Natural killer cell (primary cell): ENCODE measurements at regions of chr15 and their contacts with region 1.

Region 1: DNA sequence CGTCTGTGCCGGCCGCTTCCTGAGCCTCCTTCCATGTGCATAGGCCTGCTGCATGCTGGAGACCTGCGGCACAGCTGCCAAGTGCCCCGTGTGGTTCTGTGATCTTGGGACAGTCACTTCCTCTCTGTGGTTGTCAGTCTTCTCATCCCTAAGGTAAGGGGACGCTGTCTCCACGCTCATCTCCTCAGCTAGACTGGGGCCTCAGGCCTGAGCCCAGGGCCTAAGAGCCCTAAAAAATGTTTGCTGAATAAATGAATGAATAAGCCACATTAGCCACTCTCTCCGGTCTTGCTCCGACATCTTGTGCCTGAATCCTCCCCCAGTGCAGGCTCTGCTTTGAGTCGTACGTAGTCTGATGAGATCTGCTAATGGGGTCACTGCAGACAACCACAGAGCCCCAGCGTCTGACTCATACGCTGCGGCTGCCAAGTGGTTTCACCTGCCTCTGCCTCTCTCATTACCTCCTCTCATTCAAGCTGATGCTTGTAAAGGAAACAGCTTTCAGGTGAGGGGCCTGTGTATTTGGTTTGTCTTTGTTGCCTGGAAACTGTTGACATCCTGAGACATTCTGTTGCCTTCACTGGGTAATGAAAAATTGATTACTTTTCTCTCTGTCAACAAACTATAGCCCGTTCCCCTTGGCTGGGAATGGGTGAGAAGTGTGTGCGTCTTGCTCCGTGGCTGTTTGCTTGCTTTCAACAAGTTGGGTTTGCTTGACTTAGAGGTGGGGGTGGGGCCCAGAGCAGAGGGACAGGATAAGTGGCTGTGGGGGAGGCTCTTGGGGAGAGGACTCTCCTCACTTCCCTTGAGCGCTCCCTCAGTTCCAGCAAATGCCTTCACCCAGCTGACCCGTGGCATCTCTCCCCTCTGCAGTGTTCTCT is 15.9 kb downstream of the RPLP1 start:
- DNase-seq: peak; percentile 85 to 95
- ATAC-seq: peak; percentile 82 to 94 (median 92)
- H3K4me3 ChIP-seq: no peak overlapping the region
- H3K4me3 Mint-ChIP-seq: peak overlapping the region; percentile 88
- H3K27ac ChIP-seq: peak overlapping the region; percentile 81
- H3K27ac Mint-ChIP-seq: peak overlapping the region; percentile 89 to 98
- H3K4me1 ChIP-seq: peaks cover 32% of the 10 kb centered on the region
- H3K4me1 Mint-ChIP-seq: peaks cover 20 to 21% of the 10 kb centered on the region in 2 donors
- H3K27me3 ChIP-seq: peaks cover 2% of the 10 kb centered on the region
- H3K27me3 Mint-ChIP-seq: peaks cover 17 to 30% of the 10 kb centered on the region in 2 donors
- CTCF ChIP-seq: no peak

Region 2: GRCh38 chr15:69253156-69253555 is 215.3 kb before region 1 on chr15:
- intact Hi-C with region 1: no loop called
- DNase-seq: no peak
- ATAC-seq: no peak
- H3K4me3 ChIP-seq: no peak overlapping the region
- H3K4me3 Mint-ChIP-seq: no peak overlapping the region
- H3K27ac ChIP-seq: no peak overlapping the region
- H3K27ac Mint-ChIP-seq: no peak overlapping the region
- H3K4me1 ChIP-seq: no peaks in the 10 kb centered on the region
- H3K4me1 Mint-ChIP-seq: peaks cover 0 to 5% of the 10 kb centered on the region in 2 donors
- H3K27me3 ChIP-seq: no peaks in the 10 kb centered on the region
- H3K27me3 Mint-ChIP-seq: no peaks in the 10 kb centered on the region
- CTCF ChIP-seq: no peak

Region 3: GRCh38 chr15:69413822-69414700 is 54.4 kb before region 1 on chr15 and contains the start of gene KIF23:
- intact Hi-C with region 1: no loop called
- DNase-seq: peak; percentile 86 to 98
- ATAC-seq: peak; percentile 94 to 98 (median 98)
- H3K4me3 ChIP-seq: peak within 1 kb of the TSS; percentile 89
- H3K4me3 Mint-ChIP-seq: peak within 1 kb of the TSS; percentile 79
- H3K27ac ChIP-seq: no peak within 1 kb of the TSS
- H3K27ac Mint-ChIP-seq: peak within 1 kb of the TSS; percentile 44 to 77
- H3K4me1 ChIP-seq: peaks cover 11% of the 10 kb centered on the region
- H3K4me1 Mint-ChIP-seq: peaks cover 5 to 10% of the 10 kb centered on the region in 2 donors
- H3K27me3 ChIP-seq: peaks cover 2% of the 10 kb centered on the region
- H3K27me3 Mint-ChIP-seq: peaks cover 0 to 4% of the 10 kb centered on the region in 2 donors
- CTCF ChIP-seq: no peak
- total RNA-seq, gene KIF23: 1.2 to 2.1 (median 1.9) TPM

Region 4: GRCh38 chr15:69452692-69453521 is 15.6 kb before region 1 on chr15 and contains the start of gene RPLP1:
- intact Hi-C with region 1: loop called (anchors 1 kb)
- DNase-seq: peak; percentile 96 to 99
- ATAC-seq: peak; percentile 84 to 94 (median 90)
- H3K4me3 ChIP-seq: peak within 1 kb of the TSS; percentile 83
- H3K4me3 Mint-ChIP-seq: peak within 1 kb of the TSS; percentile 98
- H3K27ac ChIP-seq: peak within 1 kb of the TSS; percentile 83
- H3K27ac Mint-ChIP-seq: peak within 1 kb of the TSS; percentile 98 to 100
- H3K4me1 ChIP-seq: peaks cover 23% of the 10 kb centered on the region
- H3K4me1 Mint-ChIP-seq: peaks cover 41 to 45% of the 10 kb centered on the region in 2 donors
- H3K27me3 ChIP-seq: no peaks in the 10 kb centered on the region
- H3K27me3 Mint-ChIP-seq: no peaks in the 10 kb centered on the region
- CTCF ChIP-seq: no peak
- total RNA-seq, gene RPLP1: 895 to 1,167 (median 974) TPM

Region 5: GRCh38 chr15:69666411-69666882 is 198.0 kb after region 1 on chr15:
- intact Hi-C with region 1: loop called (anchors 5 kb)
- DNase-seq: peak in 1 of 2 donors; percentile 51
- ATAC-seq: peak in 1 of 3 donors; percentile 31
- H3K4me3 ChIP-seq: no peak overlapping the region
- H3K4me3 Mint-ChIP-seq: no peak overlapping the region
- H3K27ac ChIP-seq: peak overlapping the region; percentile 8
- H3K27ac Mint-ChIP-seq: peak overlapping the region in 1 of 2 donors; percentile 78
- H3K4me1 ChIP-seq: peaks cover 76% of the 10 kb centered on the region
- H3K4me1 Mint-ChIP-seq: peaks cover 57 to 63% of the 10 kb centered on the region in 2 donors
- H3K27me3 ChIP-seq: no peaks in the 10 kb centered on the region
- H3K27me3 Mint-ChIP-seq: peaks cover 15 to 28% of the 10 kb centered on the region in 2 donors
- CTCF ChIP-seq: no peak

Region 6: DNA sequence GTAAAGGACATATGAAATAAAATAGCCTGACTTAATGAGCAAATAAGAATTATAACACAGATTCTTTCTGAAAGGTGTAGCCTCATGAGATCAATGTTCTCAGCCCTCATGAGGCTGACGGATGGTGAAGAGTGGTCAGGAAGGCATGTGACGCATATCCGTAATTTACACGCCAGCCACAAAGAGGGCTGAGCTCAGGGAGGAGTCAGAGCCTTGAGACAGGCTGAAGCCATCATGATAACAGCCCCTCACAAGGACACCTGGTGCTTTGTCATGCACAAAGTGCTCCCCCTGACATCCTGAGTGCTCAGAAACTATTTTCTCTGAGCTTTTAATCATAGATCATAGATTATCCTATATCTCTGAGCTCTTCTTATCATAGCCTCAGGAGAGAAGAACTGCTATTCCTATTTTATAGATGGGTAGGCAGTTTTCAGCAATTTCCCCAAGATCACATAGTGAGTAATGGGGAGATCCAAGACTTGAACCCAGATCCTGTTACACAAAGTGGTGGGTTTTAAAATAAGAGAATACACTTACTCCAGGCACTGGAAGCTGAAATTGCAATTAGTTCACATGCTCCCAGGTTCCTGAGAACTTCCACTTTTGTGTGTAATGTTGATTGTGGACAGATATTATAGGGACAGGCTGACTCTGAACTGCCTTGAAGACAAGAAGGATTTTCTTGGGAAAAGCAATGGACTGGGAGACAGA is 251.2 kb after region 1 on chr15:
- intact Hi-C with region 1: loop called (anchors 2 kb)
- DNase-seq: peak; percentile 69 to 89
- ATAC-seq: peak; percentile 79 to 94 (median 92)
- H3K4me3 ChIP-seq: no peak overlapping the region
- H3K4me3 Mint-ChIP-seq: peak overlapping the region; percentile 59
- H3K27ac ChIP-seq: peak overlapping the region; percentile 90
- H3K27ac Mint-ChIP-seq: peak overlapping the region; percentile 74 to 85
- H3K4me1 ChIP-seq: peaks cover 82% of the 10 kb centered on the region
- H3K4me1 Mint-ChIP-seq: peaks cover 85 to 93% of the 10 kb centered on the region in 2 donors
- H3K27me3 ChIP-seq: no peaks in the 10 kb centered on the region
- H3K27me3 Mint-ChIP-seq: peaks cover 6% of the 10 kb centered on the region in 2 donors
- CTCF ChIP-seq: no peak

Region 7: DNA sequence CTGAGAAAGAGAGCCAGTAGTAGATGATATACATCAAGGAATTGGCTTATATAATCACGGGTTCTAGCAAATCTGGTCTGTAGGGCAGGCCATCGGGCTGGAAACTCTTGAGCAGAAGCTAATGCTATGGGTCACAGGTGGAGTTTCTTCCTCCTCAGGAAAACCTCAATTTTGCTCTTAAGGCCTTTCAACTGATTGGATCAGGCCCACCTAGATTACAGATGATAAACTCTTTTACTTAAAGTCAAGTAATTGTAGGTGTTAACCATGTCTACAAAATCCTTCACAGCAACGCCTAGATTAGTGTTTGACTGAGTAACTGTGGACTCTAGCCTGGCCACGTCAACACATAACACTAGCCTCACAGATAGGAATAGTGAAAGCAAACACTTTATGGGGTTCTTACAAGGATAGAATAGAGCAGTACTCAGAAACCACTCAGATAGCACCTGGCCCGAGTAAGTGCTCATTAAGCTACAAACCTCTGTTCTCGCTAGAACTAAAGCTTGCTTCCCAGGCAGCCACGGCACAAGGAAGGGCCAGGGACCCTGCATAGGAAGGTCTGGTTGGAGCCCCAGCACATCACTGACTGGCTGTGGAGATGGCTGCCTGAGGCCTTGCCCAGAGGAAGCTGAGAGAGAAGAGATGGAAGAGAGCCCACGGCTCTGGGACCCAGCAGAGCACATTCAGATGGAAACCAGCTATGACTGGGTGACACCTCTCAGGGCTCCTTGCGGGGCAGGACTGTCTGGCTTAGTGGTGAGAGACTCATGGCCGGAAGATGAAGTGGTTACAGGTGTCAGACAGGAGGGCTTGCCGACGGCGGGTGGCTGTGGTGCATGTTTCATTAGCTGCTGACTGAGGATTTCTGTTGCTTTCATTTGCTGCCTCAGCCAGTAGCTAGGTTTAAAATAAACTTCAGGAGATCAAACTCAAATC is 831.7 kb after region 1 on chr15:
- intact Hi-C with region 1: loop called (anchors 5 kb)
- DNase-seq: peak; percentile 80 to 87
- ATAC-seq: peak; percentile 91 to 96 (median 94)
- H3K4me3 ChIP-seq: no peak overlapping the region
- H3K4me3 Mint-ChIP-seq: peak overlapping the region; percentile 55
- H3K27ac ChIP-seq: no peak overlapping the region
- H3K27ac Mint-ChIP-seq: peak overlapping the region; percentile 60 to 67
- H3K4me1 ChIP-seq: peaks cover 24% of the 10 kb centered on the region
- H3K4me1 Mint-ChIP-seq: peaks cover 9 to 11% of the 10 kb centered on the region in 2 donors
- H3K27me3 ChIP-seq: peaks cover 66% of the 10 kb centered on the region
- H3K27me3 Mint-ChIP-seq: peaks cover 32% of the 10 kb centered on the region in 2 donors
- CTCF ChIP-seq: no peak